A549 (cell line): ENCODE measurements at regions of chr2 and their contacts with region 1.

Region 1: DNA sequence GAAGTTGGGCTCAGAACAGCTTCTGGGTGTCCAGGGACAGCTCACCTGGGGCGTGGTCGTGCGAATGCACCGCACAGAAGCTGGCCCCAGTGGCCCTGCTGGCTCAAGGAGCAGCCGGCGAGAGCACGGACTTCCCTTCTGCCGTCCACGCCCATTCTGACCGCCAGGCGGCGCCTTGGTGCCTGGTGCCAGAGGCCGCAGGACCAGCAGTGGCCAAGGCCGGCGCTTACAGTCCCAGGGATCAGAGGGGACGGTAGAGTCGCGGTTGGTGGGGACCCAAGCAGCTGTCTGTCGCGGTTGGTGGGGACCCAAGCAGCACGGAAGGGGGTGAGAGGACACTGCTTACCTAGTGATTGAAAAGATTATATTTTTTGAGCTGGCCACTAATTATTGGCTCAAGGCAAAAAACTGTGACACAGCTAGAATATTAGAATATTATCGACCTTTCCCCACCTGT is 25.7 kb downstream of the NPPC start:
- DNase-seq: peak; percentile 84 to 86
- ATAC-seq: peak; percentile 97 to 99
- H3K4me3 ChIP-seq: no peak overlapping the region
- H3K27ac ChIP-seq: peak overlapping the region in 1 of 2 experiments; percentile 42; a peak in 1 of 6 replicates
- H3K4me1 ChIP-seq: no peaks in the 10 kb centered on the region
- CTCF ChIP-seq: peak; percentile 86
- EP300 ChIP-seq: no peak
- POLR2A ChIP-seq: no peak
- RAD21 ChIP-seq: peak; percentile 65 to 67

Region 2: GRCh38 chr2:231807020-231807419 is 93.5 kb before region 1 on chr2:
- CTCF ChIA-PET with region 1: no interaction called
- POLR2A ChIA-PET with region 1: no interaction called
- DNase-seq: no peak
- ATAC-seq: no peak
- H3K4me3 ChIP-seq: no peak overlapping the region
- H3K27ac ChIP-seq: no peak overlapping the region
- H3K4me1 ChIP-seq: peaks cover 9% of the 10 kb centered on the region; the same call in 2 of the 3 replicates
- CTCF ChIP-seq: no peak
- EP300 ChIP-seq: no peak
- POLR2A ChIP-seq: no peak
- RAD21 ChIP-seq: no peak

Region 3: DNA sequence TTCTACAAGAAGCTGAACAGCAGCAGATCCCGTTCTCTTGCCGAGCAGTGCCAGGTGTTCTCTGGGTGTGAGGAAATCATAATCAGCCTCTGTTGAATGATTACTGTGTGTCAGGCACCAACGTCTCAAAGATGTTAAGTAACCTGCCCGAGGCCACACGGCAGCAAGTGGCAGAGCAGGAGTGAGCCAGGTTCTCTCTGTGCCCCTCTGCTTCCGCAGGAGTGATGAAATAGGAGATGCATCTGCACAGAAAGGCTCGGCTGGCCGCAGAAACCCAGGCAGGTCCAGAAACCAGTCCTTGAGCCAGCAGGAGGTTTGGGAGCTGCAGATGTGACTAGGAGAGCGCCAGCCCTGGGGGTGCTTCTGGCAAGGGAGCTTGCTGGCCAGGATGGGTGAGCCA is 45.8 kb before region 1 on chr2:
- CTCF ChIA-PET with region 1: interaction called, 71 read pairs
- POLR2A ChIA-PET with region 1: no interaction called
- DNase-seq: no peak
- ATAC-seq: no peak
- H3K4me3 ChIP-seq: no peak overlapping the region
- H3K27ac ChIP-seq: no peak overlapping the region
- H3K4me1 ChIP-seq: no peaks in the 10 kb centered on the region
- CTCF ChIP-seq: no peak
- EP300 ChIP-seq: no peak
- POLR2A ChIP-seq: no peak
- RAD21 ChIP-seq: no peak

Region 4: GRCh38 chr2:231869704-231870103 is 30.8 kb before region 1 on chr2:
- CTCF ChIA-PET with region 1: no interaction called
- POLR2A ChIA-PET with region 1: no interaction called
- DNase-seq: no peak
- ATAC-seq: 0 out of 6 replicates have a peak, but pooled peaks of 1 of the 2 experiments have one; percentile 56
- H3K4me3 ChIP-seq: no peak overlapping the region
- H3K27ac ChIP-seq: no peak overlapping the region
- H3K4me1 ChIP-seq: no peaks in the 10 kb centered on the region
- CTCF ChIP-seq: no peak
- EP300 ChIP-seq: no peak
- POLR2A ChIP-seq: no peak
- RAD21 ChIP-seq: no peak

Region 5: DNA sequence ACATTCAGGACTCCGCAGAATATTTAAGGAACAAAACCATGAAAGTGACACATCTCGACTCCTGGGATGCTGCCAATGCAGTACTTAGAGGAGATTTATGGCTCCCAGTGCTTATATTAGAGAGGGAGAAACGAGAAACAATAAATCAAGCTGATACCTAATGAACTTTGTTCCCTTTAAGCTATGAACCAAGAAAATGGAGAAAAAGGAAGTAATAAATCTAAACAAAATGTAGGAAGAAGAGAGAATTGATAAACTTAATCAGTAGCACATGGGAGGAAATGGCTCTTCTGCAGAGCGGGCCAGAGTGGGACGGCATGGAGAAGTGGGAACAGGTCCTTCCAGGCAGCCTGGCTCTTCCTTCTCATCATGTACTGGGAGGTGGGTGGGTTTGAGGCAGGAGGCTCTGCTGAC is 17.0 kb before region 1 on chr2:
- CTCF ChIA-PET with region 1: interaction called, 27 read pairs
- POLR2A ChIA-PET with region 1: no interaction called
- DNase-seq: no peak
- ATAC-seq: no peak
- H3K4me3 ChIP-seq: no peak overlapping the region
- H3K27ac ChIP-seq: no peak overlapping the region
- H3K4me1 ChIP-seq: peaks cover 5% of the 10 kb centered on the region; the same call in 2 of the 3 replicates
- CTCF ChIP-seq: no peak
- EP300 ChIP-seq: no peak
- POLR2A ChIP-seq: no peak
- RAD21 ChIP-seq: no peak

Region 6: GRCh38 chr2:231917280-231918066 is 17.0 kb after region 1 on chr2:
- CTCF ChIA-PET with region 1: interaction called, 74 read pairs
- POLR2A ChIA-PET with region 1: no interaction called
- DNase-seq: no peak
- ATAC-seq: peak in 1 of 2 experiments; percentile 36; a peak in 3 of 6 replicates
- H3K4me3 ChIP-seq: no peak overlapping the region
- H3K27ac ChIP-seq: no peak overlapping the region
- H3K4me1 ChIP-seq: no peaks in the 10 kb centered on the region
- CTCF ChIP-seq: no peak
- EP300 ChIP-seq: no peak
- POLR2A ChIP-seq: no peak
- RAD21 ChIP-seq: no peak

Region 7: DNA sequence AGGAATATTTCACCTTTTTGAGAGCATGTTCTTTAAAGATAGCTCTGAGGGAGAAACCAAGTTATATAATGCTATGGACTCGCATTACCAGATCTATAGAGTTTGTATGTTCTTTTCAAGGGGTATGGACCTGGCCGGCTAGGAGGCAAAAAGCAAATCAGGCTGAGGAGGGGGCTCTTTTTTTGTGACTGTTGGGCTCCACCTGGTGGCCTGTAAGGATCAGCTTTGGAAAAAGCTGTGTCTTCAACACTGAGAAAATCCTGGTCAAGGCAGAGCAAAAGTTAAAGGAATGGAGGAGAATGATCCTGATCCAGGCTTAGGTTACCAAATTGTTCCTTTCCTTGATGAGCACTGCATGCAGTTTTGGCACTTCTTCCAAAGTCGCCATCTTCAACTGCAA is 241.5 kb after region 1 on chr2:
- CTCF ChIA-PET with region 1: interaction called, 11 read pairs
- POLR2A ChIA-PET with region 1: no interaction called
- DNase-seq: peak; percentile 13 to 40
- ATAC-seq: peak; percentile 74 to 89
- H3K4me3 ChIP-seq: no peak overlapping the region
- H3K27ac ChIP-seq: no peak overlapping the region
- H3K4me1 ChIP-seq: no peaks in the 10 kb centered on the region
- CTCF ChIP-seq: peak; percentile 90
- EP300 ChIP-seq: no peak
- POLR2A ChIP-seq: no peak
- RAD21 ChIP-seq: peak; percentile 74 to 82

Region 8: DNA sequence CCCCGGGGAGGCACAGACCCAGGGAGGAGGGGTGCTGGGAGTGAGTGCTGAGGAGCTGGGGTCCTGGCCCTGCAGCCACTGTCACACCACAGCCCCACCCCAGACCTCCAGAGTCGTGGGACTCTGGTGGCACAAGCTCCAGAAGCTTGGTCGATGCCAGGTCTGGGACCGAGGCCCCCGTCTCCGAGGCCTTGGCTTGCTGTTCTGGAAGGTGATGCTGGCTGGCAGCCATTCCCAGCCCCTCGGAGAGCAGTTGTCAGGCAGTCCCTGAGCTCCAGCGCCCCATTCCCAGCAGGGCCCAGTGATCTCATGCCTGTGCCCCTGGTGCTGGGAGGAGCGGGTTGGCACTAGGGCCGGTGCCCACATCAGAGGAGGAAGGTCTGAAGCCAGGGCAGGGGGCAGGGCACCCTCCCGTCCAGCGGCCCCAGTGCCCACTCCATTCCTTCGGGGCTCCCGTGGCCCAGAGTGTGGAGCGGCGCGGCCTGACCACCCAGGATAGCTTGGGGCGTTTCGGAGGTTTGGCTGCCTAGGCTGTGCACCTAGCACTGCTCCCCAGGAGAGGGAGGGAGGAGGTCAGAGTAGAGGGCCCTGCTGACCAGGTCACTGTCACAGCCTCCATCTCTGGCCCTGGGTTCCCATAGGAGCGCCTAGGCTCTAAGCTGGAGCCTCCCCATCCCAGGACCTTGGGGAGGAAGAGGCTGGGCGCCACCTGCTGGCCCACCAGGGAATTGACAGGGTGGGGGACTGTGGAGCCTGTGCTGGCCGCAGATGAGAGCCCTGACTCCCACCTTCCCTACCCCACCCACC is 538.6 kb after region 1 on chr2:
- CTCF ChIA-PET with region 1: interaction called, 50 read pairs
- POLR2A ChIA-PET with region 1: no interaction called
- DNase-seq: peak in 1 of 2 experiments; percentile 44
- ATAC-seq: peak; percentile 65 to 84
- H3K4me3 ChIP-seq: no peak overlapping the region
- H3K27ac ChIP-seq: no peak overlapping the region
- H3K4me1 ChIP-seq: peaks cover 11% of the 10 kb centered on the region
- CTCF ChIP-seq: peak; percentile 63
- EP300 ChIP-seq: no peak
- POLR2A ChIP-seq: no peak
- RAD21 ChIP-seq: peak; percentile 58 to 67